Breast epithelium (tissue), 4 donors: ENCODE measurements at regions of chr10 and their contacts with region 1.

Region 1: GRCh38 chr10:124043310-124044142 is 49.9 kb downstream of the CHST15 start:
- DNase-seq: no peak
- H3K4me3 ChIP-seq: no peak overlapping the region
- H3K27ac ChIP-seq: no peak overlapping the region
- H3K4me1 ChIP-seq: no peaks in the 10 kb centered on the region
- H3K27me3 ChIP-seq: no peaks in the 10 kb centered on the region
- CTCF ChIP-seq: no peak
- POLR2A ChIP-seq: no peak

Region 2: DNA sequence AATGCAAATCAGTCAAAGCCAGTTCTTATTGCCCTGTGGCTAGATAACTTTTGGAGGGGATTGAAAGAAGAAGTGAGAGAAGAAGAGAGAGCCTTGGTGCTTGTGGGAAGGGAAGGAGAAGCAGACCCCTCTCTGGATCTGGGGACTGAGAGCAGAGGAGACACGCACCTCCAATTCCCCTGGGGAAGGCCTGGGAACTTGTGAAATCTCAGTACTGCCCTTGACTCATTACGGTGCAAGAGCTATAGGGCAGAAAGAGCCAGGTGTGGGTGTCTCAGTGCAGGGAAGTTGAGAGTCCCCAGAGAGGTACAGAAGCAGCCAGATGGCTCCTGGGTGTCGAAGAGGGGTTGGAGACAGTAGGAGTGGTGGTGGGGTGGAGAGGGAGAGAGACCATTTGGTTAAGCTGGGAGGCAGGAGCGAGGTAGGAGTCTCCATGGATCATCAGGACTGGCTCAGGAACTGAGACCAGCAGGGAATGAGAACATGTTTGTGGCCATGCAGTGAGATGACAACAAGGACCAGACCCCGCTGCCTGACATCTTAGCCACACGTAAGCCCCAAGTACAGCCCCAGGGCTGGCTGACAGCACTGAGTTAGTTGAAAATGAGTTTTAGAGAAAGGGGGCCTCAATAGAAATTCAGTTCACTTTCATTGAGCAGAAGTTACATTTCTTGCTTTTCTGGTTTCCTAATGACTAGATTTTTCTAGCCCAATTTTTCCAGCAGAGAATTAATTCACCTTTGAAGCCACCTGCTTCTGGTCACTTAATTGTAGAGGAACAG is 651.2 kb before region 1 on chr10:
- intact Hi-C with region 1: no loop called
- DNase-seq: no peak
- H3K4me3 ChIP-seq: no peak overlapping the region
- H3K27ac ChIP-seq: no peak overlapping the region
- H3K4me1 ChIP-seq: no peaks in the 10 kb centered on the region
- H3K27me3 ChIP-seq: no peaks in the 10 kb centered on the region
- CTCF ChIP-seq: no peak
- POLR2A ChIP-seq: no peak

Region 3: GRCh38 chr10:124010563-124011131 is 32.9 kb before region 1 on chr10:
- intact Hi-C with region 1: no loop called
- DNase-seq: no peak
- H3K4me3 ChIP-seq: no peak overlapping the region
- H3K27ac ChIP-seq: no peak overlapping the region
- H3K4me1 ChIP-seq: no peaks in the 10 kb centered on the region
- H3K27me3 ChIP-seq: no peaks in the 10 kb centered on the region
- CTCF ChIP-seq: no peak
- POLR2A ChIP-seq: no peak

Region 4: GRCh38 chr10:125584954-125585353 is 1541.4 kb after region 1 on chr10:
- intact Hi-C with region 1: loop called (anchors 5 kb)
- DNase-seq: no peak
- H3K4me3 ChIP-seq: no peak overlapping the region
- H3K27ac ChIP-seq: no peak overlapping the region
- H3K4me1 ChIP-seq: no peaks in the 10 kb centered on the region
- H3K27me3 ChIP-seq: no peaks in the 10 kb centered on the region
- CTCF ChIP-seq: no peak
- POLR2A ChIP-seq: no peak